HCT116 (cell line): ENCODE measurements at regions of chr2 and their contacts with region 1.

Region 1: GRCh38 chr2:219498280-219499057 is at the start of gene GMPPA:
- DNase-seq: peak; percentile 99
- ATAC-seq: peak; percentile 85
- H3K4me3 ChIP-seq: peak within 1 kb of the TSS; percentile 75 to 91
- H3K27ac ChIP-seq: peak within 1 kb of the TSS; percentile 98
- H3K4me1 ChIP-seq: peaks cover 24 to 54% of the 10 kb centered on the region in 2 experiments
- H3K27me3 ChIP-seq: no peaks in the 10 kb centered on the region
- CTCF ChIP-seq: 0 out of 6 replicates have a peak, but pooled peaks of 1 of the 3 experiments have one; percentile 5
- POLR2A ChIP-seq: peak; percentile 58
- RAD21 ChIP-seq: no peak
- total RNA-seq, gene GMPPA: 71.8 TPM

Region 2: DNA sequence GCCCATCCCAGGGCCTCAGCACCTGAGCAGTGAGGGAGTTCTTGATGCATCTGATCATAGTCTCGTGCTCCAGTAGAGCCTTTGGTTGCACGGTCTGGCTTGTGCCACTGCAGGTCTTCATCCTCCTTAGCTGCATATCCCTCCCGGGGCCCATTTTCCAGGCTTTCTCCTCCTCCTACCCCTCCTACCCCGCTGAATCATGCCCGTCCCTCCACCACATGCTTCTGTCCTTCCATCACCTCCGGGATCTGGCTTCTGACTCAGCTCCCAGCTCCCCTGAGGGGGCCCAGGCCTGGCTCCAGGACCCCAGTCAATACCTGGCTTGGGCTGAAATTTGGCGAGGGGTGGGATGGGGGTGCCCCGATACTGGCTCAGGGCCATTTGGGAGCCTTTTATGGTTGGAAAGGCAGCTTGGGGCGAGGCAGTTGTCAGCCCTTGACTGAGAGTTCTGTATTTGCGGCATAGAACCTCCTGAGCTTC is 45.6 kb before region 1 on chr2:
- CTCF ChIA-PET with region 1: interaction called, 6 read pairs
- POLR2A ChIA-PET with region 1: interaction called, 15 read pairs
- RAD21 ChIA-PET with region 1: no interaction called
- intact Hi-C with region 1: no loop called
- DNase-seq: peak; percentile 71
- ATAC-seq: peak; percentile 87
- H3K4me3 ChIP-seq: peak overlapping the region in 1 of 2 experiments; percentile 17; a peak in 2 of 4 replicates
- H3K27ac ChIP-seq: peak overlapping the region; percentile 75
- H3K4me1 ChIP-seq: peaks cover 26 to 53% of the 10 kb centered on the region in 2 experiments
- H3K27me3 ChIP-seq: no peaks in the 10 kb centered on the region
- CTCF ChIP-seq: no peak
- POLR2A ChIP-seq: no peak
- RAD21 ChIP-seq: no peak

Region 3: GRCh38 chr2:219475697-219476651 is 22.5 kb before region 1 on chr2:
- CTCF ChIA-PET with region 1: interaction called, 9 read pairs
- POLR2A ChIA-PET with region 1: interaction called, 10 read pairs
- RAD21 ChIA-PET with region 1: no interaction called
- intact Hi-C with region 1: loop called (anchors 2 kb)
- DNase-seq: no peak
- ATAC-seq: peak; percentile 91
- H3K4me3 ChIP-seq: no peak overlapping the region
- H3K27ac ChIP-seq: no peak overlapping the region
- H3K4me1 ChIP-seq: peaks cover 3 to 15% of the 10 kb centered on the region in 2 experiments; a peak in 3 of 4 replicates
- H3K27me3 ChIP-seq: no peaks in the 10 kb centered on the region
- CTCF ChIP-seq: peak; percentile 88 to 96 (median 94)
- POLR2A ChIP-seq: no peak
- RAD21 ChIP-seq: peak; percentile 89

Region 4: DNA sequence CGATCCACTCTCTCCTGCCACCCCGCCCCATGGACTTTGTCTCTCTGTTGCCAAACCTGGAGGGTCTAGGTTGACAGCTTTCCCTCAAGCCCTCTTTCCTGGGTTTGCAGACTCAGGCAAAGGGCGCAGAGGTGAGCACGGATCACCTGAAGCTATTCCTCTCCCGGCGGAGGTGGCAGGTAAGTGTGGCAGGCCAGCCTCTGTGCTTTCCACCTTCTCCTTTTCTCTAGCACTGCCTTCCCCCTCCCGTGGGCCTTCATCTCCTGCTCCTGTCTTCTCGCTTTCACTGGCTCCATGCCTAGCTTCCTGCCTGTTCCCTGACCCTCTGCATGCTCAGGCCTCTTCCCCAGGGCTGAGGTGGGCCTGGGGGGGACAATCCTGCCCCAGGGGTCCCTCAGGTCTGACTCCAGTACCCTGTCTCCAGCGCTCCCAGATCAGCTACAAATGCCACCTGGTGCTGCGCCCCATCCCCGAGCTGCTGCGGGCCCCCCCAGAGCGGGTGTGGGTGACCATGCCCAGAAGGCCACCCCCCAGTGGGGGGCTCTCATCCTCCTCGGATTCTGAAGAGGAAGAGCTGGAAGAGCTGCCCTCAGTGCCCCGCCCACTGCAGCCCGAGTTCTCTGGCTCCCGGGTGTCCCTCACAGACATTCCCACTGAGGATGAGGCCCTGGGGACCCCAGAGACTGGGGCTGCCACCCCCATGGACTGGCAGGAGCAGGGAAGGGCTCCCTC is 15.6 kb before region 1 on chr2:
- CTCF ChIA-PET with region 1: interaction called, 10 read pairs
- POLR2A ChIA-PET with region 1: no interaction called
- RAD21 ChIA-PET with region 1: no interaction called
- intact Hi-C with region 1: no loop called
- DNase-seq: no peak
- ATAC-seq: no peak
- H3K4me3 ChIP-seq: no peak overlapping the region
- H3K27ac ChIP-seq: no peak overlapping the region
- H3K4me1 ChIP-seq: peaks cover 0 to 5% of the 10 kb centered on the region in 2 experiments; a peak in 1 of 4 replicates
- H3K27me3 ChIP-seq: no peaks in the 10 kb centered on the region
- CTCF ChIP-seq: no peak
- POLR2A ChIP-seq: no peak
- RAD21 ChIP-seq: no peak

Region 5: DNA sequence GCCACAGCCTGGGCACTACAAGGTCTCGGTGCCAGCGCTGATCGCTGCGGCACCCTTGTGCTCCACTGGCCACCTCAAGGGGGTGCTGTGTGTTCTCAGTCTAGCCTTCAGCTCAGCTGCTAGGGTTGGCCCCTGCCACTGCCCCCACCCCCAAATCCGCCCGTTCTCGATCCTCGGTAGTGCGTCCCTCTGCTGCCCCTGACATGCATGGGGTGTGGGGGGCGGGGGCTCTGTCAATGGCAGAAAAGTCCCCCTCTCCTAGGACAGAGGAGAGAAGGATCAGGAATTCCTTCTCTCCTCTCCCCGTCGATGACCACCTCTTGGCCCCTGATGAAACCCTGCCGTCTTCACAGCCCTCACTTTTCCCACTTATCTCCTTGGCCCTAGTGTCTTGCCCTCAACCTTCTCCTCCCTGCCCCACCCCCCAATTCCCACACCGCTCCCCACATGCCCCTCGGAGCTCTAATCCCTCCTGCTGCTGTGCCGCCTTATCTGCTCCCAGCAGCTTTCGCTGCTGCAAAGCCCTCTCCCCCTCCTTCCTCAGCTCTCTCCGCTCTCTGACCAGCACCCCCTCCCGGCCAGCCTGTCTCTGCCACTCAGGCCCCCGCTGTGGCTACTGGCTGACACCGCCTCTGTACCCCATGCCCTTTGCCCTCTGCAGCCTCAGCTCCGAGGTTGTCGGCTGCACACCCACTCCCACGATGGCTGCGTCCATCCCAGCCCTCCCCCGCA is 11.5 kb after region 1 on chr2:
- CTCF ChIA-PET with region 1: interaction called, 56 read pairs
- POLR2A ChIA-PET with region 1: interaction called, 11 read pairs
- RAD21 ChIA-PET with region 1: no interaction called
- intact Hi-C with region 1: no loop called
- DNase-seq: no peak
- ATAC-seq: peak; percentile 90
- H3K4me3 ChIP-seq: 0 out of 4 replicates have a peak overlapping the region, but pooled peaks of 1 of the 2 experiments have one; percentile 2
- H3K27ac ChIP-seq: no peak overlapping the region
- H3K4me1 ChIP-seq: peaks cover 0 to 19% of the 10 kb centered on the region in 2 experiments; a peak in 2 of 4 replicates
- H3K27me3 ChIP-seq: no peaks in the 10 kb centered on the region
- CTCF ChIP-seq: peak; percentile 59 to 91 (median 80); a peak in 5 of 6 replicates
- POLR2A ChIP-seq: no peak
- RAD21 ChIP-seq: peak; percentile 70

Region 6: GRCh38 chr2:219521066-219521880 is 22.8 kb after region 1 on chr2:
- CTCF ChIA-PET with region 1: interaction called, 103 read pairs
- POLR2A ChIA-PET with region 1: interaction called, 18 read pairs
- RAD21 ChIA-PET with region 1: interaction called, 4 to 5 read pairs
- intact Hi-C with region 1: no loop called
- DNase-seq: no peak
- ATAC-seq: peak; percentile 82
- H3K4me3 ChIP-seq: peak overlapping the region; percentile 21 to 49
- H3K27ac ChIP-seq: peak overlapping the region; percentile 78
- H3K4me1 ChIP-seq: peaks cover 36 to 73% of the 10 kb centered on the region in 2 experiments
- H3K27me3 ChIP-seq: no peaks in the 10 kb centered on the region
- CTCF ChIP-seq: peak in 2 of 3 experiments; percentile 82 to 85; a peak in 4 of 6 replicates
- POLR2A ChIP-seq: no peak
- RAD21 ChIP-seq: no peak

Region 7: DNA sequence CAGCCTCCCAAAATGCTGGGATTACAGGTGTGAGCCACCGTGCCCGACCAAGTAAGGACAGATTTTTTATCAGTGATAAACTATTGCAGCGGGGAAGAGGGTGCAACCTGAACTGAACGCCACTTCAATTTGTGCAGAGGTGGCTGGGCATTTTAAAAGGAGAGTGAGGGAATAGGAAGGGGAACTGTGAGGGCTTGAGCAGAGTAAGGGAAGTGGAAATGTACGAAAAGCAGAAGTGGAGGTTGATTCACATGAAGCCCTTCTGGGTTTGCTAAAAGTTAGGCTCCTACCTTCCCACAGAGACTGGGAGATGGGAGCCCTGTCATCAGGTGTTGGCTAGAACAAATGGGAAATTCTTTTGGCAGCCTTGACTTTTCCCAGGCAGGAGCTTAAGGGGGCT is 105.3 kb after region 1 on chr2:
- CTCF ChIA-PET with region 1: no interaction called
- POLR2A ChIA-PET with region 1: no interaction called
- RAD21 ChIA-PET with region 1: no interaction called
- intact Hi-C with region 1: no loop called
- DNase-seq: no peak
- ATAC-seq: no peak
- H3K4me3 ChIP-seq: no peak overlapping the region
- H3K27ac ChIP-seq: no peak overlapping the region
- H3K4me1 ChIP-seq: peaks cover 0 to 1% of the 10 kb centered on the region in 2 experiments; a peak in 3 of 4 replicates
- H3K27me3 ChIP-seq: no peaks in the 10 kb centered on the region
- CTCF ChIP-seq: no peak
- POLR2A ChIP-seq: no peak
- RAD21 ChIP-seq: no peak

Region 8: GRCh38 chr2:219689676-219690628 is 191.5 kb after region 1 on chr2:
- CTCF ChIA-PET with region 1: interaction called, 6 read pairs
- POLR2A ChIA-PET with region 1: interaction called, 7 read pairs
- RAD21 ChIA-PET with region 1: no interaction called
- intact Hi-C with region 1: loop called (anchors 2 kb)
- DNase-seq: no peak
- ATAC-seq: no peak
- H3K4me3 ChIP-seq: peak overlapping the region; percentile 61 to 72
- H3K27ac ChIP-seq: peak overlapping the region; percentile 98
- H3K4me1 ChIP-seq: peaks cover 61 to 96% of the 10 kb centered on the region in 2 experiments
- H3K27me3 ChIP-seq: no peaks in the 10 kb centered on the region
- CTCF ChIP-seq: peak in 2 of 3 experiments; percentile 31 to 73; a peak in 4 of 6 replicates
- POLR2A ChIP-seq: no peak
- RAD21 ChIP-seq: no peak